Ovary (tissue), 10 donors: ENCODE measurements at regions of chrX and their contacts with region 1.

Region 1: DNA sequence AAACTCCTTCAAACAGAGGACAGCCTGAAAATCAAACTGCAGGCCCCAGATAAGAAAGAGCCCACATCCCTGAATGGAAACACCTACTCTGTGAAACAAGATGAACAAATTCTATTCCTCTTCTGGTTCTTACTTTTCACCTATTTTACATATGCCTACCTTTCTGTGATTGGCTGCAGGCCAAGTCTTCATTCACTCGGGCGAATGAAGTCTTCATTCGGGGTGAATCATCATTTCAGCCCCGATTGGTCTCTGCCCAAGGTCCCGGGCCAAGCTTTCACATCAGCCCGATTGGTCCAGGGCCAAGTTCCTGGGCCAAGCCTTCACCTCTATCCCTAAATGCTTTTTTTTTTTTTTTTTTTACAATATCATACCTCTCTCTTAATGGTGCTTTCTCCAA is 529.8 kb upstream of the ACTRT1 start:
- DNase-seq: no peak
- H3K4me3 ChIP-seq: no peak overlapping the region
- H3K27ac ChIP-seq: no peak overlapping the region
- H3K4me1 ChIP-seq: no peaks in the 10 kb centered on the region
- H3K27me3 ChIP-seq: no peaks in the 10 kb centered on the region
- CTCF ChIP-seq: no peak
- EP300 ChIP-seq: no peak
- POLR2A ChIP-seq: no peak

Region 2: DNA sequence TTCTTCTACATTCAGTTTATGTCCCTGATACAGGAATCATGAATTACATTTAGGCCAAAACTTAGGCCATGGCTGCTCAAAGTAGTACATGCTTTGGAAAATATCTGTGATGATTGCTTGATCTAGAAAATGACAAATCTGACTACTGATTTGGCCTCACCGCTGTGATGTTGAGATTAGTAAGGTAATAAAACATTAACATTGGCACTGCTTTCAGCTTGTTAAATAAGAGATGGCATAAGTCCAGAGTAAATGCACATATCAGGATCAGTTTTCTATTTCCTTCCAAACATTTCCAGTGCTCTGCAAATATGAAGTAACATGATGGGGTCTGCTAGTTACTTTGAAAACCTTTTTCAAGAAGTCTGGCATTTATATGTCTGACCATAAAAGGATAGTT is 157.5 kb after region 1 on chrX:
- intact Hi-C with region 1: loop called in 1 of 4 experiments (anchors 10 kb)
- DNase-seq: no peak
- H3K4me3 ChIP-seq: no peak overlapping the region
- H3K27ac ChIP-seq: no peak overlapping the region
- H3K4me1 ChIP-seq: no peaks in the 10 kb centered on the region
- H3K27me3 ChIP-seq: no peaks in the 10 kb centered on the region
- CTCF ChIP-seq: no peak
- EP300 ChIP-seq: no peak
- POLR2A ChIP-seq: no peak

Region 3: GRCh38 chrX:129037381-129037780 is 455.3 kb after region 1 on chrX:
- intact Hi-C with region 1: no loop called
- DNase-seq: no peak
- H3K4me3 ChIP-seq: no peak overlapping the region
- H3K27ac ChIP-seq: no peak overlapping the region
- H3K4me1 ChIP-seq: no peaks in the 10 kb centered on the region
- H3K27me3 ChIP-seq: no peaks in the 10 kb centered on the region
- CTCF ChIP-seq: no peak
- EP300 ChIP-seq: no peak
- POLR2A ChIP-seq: no peak

Region 4: DNA sequence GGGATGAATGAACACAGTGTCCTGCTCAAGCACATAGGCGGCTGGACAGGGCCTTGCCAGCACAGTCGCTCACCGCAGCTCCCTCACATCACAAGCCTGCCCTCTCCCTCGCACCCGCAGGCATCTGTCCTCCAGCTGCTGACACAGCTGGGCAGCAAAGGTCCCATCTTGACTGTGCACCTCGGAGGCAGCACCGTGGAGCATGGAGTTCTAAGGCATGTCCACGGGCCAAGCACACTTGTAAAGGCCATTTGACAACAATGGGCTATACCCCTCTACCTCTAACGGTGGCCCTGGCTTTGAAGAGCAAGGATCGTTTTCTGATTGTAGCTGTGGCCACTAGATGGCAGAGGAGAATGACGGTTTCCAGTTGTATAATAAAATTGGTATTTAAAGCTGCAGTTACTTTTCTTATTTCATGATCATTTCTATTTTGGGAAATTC is 1019.0 kb after region 1 on chrX:
- intact Hi-C with region 1: no loop called
- DNase-seq: peak in 4 of 5 donors; percentile 28 to 46 (median 33)
- H3K4me3 ChIP-seq: no peak overlapping the region
- H3K27ac ChIP-seq: no peak overlapping the region
- H3K4me1 ChIP-seq: peaks cover 3% of the 10 kb centered on the region
- H3K27me3 ChIP-seq: no peaks in the 10 kb centered on the region
- CTCF ChIP-seq: peak in 2 of 3 donors; percentile 42 to 48
- EP300 ChIP-seq: no peak
- POLR2A ChIP-seq: no peak